AG04449 (cell line): ENCODE measurements at regions of chr4 and their contacts with region 1.

Region 1: GRCh38 chr4:128863312-128864075 is 54.0 kb downstream of the JADE1 start:
- DNase-seq: no peak
- H3K4me3 ChIP-seq: no peak overlapping the region
- CTCF ChIP-seq: peak; percentile 77

Region 2: GRCh38 chr4:128379860-128380259 is 483.6 kb before region 1 on chr4:
- CTCF ChIA-PET with region 1: interaction called, 24 read pairs
- POLR2A ChIA-PET with region 1: no interaction called
- DNase-seq: no peak
- H3K4me3 ChIP-seq: no peak overlapping the region
- CTCF ChIP-seq: peak; percentile 67

Region 3: GRCh38 chr4:128454281-128455075 is 409.0 kb before region 1 on chr4:
- CTCF ChIA-PET with region 1: interaction called, 22 read pairs
- POLR2A ChIA-PET with region 1: no interaction called
- DNase-seq: peak; percentile 69
- H3K4me3 ChIP-seq: peak overlapping the region; percentile 21; the same call in 1 of the 2 replicates
- CTCF ChIP-seq: peak; percentile 83

Region 4: GRCh38 chr4:128483816-128484215 is 379.7 kb before region 1 on chr4:
- CTCF ChIA-PET with region 1: no interaction called
- POLR2A ChIA-PET with region 1: no interaction called
- DNase-seq: no peak
- H3K4me3 ChIP-seq: no peak overlapping the region
- CTCF ChIP-seq: no peak

Region 5: DNA sequence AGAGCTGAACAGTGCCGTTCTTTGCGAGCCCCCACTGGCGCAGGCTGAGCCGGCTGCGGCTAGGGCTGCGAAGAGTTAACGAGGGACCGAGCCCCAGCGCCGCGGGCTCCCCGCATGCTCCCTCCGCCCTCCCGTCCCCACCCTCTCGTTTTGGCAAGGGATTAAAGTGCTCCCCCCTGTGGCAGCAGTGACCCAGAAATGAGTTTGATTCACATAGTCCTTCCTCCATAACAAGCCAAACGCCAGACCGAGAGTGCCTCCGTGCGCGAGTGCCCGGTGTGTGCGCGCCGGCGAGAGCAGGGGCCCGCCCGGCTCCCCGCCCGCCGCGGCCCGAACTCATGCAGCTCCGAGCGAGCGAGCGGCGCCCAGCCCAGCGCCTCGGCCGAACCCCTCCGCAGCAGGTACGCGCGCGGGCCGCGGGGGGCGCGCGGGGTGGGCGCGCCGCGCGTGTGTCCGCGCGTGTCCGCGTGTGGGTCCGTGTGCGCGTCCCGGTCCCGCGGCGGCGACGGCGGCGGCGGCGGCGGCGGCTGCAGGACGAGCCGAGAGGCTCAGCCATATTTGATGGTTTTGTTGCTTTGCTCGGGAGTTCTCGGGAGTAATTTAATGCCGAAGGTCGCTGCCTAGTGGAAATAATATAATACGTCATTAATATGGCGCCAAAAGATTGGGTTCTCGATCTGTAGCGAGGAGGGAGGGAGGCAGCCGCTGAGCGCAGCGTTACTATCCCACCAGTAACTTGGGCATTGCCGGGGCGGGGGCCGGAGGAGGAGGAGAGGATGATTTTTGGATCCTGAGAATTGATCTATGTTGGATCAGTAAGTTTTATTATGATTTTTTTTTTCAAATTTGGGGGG is 53.8 kb before region 1 on chr4 and contains the start of gene JADE1:
- CTCF ChIA-PET with region 1: interaction called, 19 read pairs
- POLR2A ChIA-PET with region 1: interaction called, 4 read pairs
- DNase-seq: peak; percentile 77
- H3K4me3 ChIP-seq: peak within 1 kb of the TSS; percentile 77
- CTCF ChIP-seq: peak; percentile 81

Region 6: DNA sequence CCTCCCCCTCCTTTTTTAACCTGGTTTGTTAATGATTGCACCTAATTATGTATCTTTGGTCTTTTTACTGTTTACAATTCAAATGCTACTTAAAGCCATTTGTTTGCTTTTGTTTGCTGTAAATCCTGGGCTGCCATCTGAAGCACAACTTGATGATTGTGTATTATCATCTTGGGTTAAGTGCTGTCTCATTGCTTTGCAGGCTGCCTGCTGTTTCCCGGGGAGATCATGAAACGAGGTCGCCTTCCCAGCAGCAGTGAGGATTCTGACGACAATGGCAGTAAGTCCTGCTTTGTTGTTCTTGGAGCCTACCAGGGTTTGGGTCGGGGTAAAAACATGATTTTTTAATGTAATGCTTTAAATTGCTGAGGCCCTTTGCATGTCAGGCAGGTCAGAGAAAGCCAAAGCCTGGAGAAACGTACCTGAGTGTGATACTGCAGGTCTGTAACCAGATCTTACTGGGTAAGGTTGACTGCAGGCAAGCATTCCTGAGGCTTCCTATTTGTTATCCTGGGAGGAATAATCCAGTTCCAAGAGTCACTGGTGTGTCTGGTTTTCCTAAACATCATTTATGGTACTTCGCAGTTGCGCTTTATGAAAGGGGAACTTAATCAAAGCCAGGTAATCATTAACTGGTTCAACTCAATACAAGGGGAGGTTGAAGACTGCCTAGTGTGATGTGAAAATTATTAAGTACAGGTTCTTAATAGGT is 31.8 kb before region 1 on chr4:
- CTCF ChIA-PET with region 1: interaction called, 15 read pairs
- POLR2A ChIA-PET with region 1: no interaction called
- DNase-seq: no peak
- H3K4me3 ChIP-seq: no peak overlapping the region
- CTCF ChIP-seq: no peak

Region 7: DNA sequence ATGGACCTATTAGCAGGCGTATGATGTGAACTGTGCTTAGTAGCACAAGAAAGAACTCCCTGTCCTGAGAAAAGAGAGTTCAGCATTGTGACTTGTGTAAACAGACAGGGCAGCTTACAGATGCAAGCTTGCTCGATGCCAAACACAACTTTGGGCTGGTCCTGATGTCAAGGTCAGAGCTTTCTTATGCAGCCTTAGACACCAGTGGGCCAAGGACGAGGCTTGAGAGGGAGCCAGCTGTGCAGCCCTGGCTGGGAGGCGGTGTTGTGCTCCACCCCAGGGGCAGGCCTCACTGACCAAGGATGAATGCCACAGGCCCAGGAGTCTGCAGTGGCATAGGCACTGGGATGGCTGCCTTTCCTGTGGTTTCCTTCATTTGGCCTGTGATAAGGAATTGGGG is 18.6 kb before region 1 on chr4:
- CTCF ChIA-PET with region 1: interaction called, 13 read pairs
- POLR2A ChIA-PET with region 1: no interaction called
- DNase-seq: no peak
- H3K4me3 ChIP-seq: no peak overlapping the region
- CTCF ChIP-seq: no peak

Region 8: GRCh38 chr4:129043523-129043922 is 180.0 kb after region 1 on chr4:
- CTCF ChIA-PET with region 1: no interaction called
- POLR2A ChIA-PET with region 1: no interaction called
- DNase-seq: peak; percentile 9
- H3K4me3 ChIP-seq: no peak overlapping the region
- CTCF ChIP-seq: no peak